CD4-positive, alpha-beta memory T cell (primary cell): ENCODE measurements at regions of chr1 and their contacts with region 1.

Region 1: DNA sequence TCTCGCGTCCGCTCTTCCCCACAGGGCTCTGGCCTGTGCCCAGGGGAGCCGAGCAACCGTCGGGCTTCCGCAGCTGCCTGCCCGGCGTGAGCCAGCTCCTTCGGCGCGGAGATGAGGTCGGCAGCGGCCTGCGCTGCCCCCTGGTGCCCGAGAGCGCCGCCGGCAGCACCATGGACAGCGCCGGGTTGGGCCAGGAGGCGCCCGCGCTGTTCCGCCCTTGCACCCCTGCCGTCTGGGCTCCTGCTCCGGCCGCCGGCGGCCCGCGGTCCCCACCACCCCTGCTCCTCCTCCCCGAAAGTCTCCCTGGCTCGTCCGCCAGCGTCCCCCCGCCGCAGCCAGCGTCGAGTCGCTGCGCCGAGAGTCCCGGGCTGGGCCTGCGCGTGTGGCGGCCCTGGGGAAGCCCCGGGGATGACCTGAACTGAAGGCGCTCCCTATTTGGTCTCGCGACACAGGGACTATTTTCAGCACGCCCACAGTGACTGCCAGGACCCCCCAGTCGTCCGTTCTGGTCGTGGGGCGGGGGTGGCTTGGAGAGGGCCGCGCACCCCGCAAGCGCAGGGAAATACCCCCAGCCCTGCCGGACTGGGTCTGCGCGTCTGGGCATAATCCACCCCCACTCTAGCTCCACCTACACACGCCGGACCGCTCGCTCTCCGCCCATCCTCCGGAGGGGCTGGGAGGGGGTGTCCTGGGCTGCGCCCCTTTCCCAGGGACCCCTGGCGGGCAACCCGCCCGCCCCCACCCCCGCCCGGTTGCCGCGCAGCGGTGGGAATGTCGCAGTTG is 1.3 kb downstream of the HES3 start:
- DNase-seq: peak; percentile 67 to 78 (median 75)
- H3K4me3 ChIP-seq: no peak overlapping the region
- H3K4me3 Mint-ChIP-seq: no peak overlapping the region
- H3K27ac ChIP-seq: no peak overlapping the region
- H3K27ac Mint-ChIP-seq: peak overlapping the region in 1 of 7 donors; percentile 44
- H3K4me1 ChIP-seq: peaks cover 23% of the 10 kb centered on the region
- H3K4me1 Mint-ChIP-seq: peaks cover 8 to 29% (median 13%) of the 10 kb centered on the region in 4 donors
- H3K27me3 ChIP-seq: peaks cover 43% of the 10 kb centered on the region
- H3K27me3 Mint-ChIP-seq: peaks cover 30 to 42% of the 10 kb centered on the region in 2 donors

Region 2: DNA sequence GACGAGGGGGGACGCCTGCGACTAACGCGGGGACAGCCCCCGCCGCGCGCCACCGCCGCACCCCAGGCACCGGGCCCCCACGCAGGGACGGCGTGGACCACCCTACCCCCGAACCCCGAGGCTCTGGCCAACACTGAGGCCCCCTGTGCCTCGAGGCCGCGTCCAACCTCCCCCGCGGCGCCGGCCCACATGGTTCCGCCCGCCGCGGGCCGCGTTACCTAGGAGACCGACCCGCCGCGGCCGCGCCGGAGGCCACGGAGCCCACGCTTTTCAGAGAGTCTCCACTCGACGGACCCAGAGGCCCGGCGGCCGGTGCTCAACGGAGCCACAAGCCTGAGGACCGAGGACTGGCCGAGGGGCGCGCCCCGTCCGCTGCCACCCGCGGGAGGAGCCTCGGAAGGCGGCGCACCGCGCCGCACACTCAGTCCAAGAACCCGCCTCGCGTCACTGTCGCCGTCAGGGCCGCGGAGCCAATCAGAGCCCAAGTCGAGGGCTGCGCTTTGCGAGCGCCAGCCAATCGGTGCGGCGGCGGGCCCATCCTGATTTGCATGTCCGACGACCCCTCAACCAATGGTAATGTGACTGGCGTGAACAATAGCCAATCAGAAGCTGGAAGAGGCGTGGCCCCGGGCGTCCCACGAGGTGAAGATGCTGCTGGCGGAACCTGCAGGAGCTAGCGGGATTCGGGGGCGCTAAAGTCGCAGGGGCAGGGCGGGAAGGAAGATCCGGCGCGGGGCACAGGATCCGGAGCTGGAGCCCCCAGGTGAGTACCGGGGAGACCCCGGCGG is 253.1 kb before region 1 on chr1 and contains the start of gene NPHP4:
- CTCF ChIA-PET with region 1: no interaction called
- POLR2A ChIA-PET with region 1: no interaction called
- intact Hi-C with region 1: loop called (anchors 5 kb)
- DNase-seq: peak; percentile 99
- H3K4me3 ChIP-seq: peak within 1 kb of the TSS; percentile 86 to 92
- H3K4me3 Mint-ChIP-seq: peak within 1 kb of the TSS; percentile 95 to 98 (median 96)
- H3K27ac ChIP-seq: peak within 1 kb of the TSS; percentile 96
- H3K27ac Mint-ChIP-seq: peak within 1 kb of the TSS; percentile 97 to 99 (median 98)
- H3K4me1 ChIP-seq: peaks cover 37% of the 10 kb centered on the region
- H3K4me1 Mint-ChIP-seq: peaks cover 13 to 39% (median 30%) of the 10 kb centered on the region in 4 donors
- H3K27me3 ChIP-seq: no peaks in the 10 kb centered on the region
- H3K27me3 Mint-ChIP-seq: no peaks in the 10 kb centered on the region
- total RNA-seq, gene NPHP4: 7.6 to 9.6 TPM

Region 3: GRCh38 chr1:6108937-6109614 is 136.2 kb before region 1 on chr1:
- CTCF ChIA-PET with region 1: interaction called, 5 read pairs
- POLR2A ChIA-PET with region 1: no interaction called
- intact Hi-C with region 1: loop called (anchors 2 kb)
- DNase-seq: peak in 3 of 5 donors; percentile 18 to 40 (median 28)
- H3K4me3 ChIP-seq: no peak overlapping the region
- H3K4me3 Mint-ChIP-seq: no peak overlapping the region
- H3K27ac ChIP-seq: no peak overlapping the region
- H3K27ac Mint-ChIP-seq: no peak overlapping the region
- H3K4me1 ChIP-seq: no peaks in the 10 kb centered on the region
- H3K4me1 Mint-ChIP-seq: peaks cover 0 to 1% (median 0%) of the 10 kb centered on the region in 4 donors
- H3K27me3 ChIP-seq: no peaks in the 10 kb centered on the region
- H3K27me3 Mint-ChIP-seq: peaks cover 3 to 9% of the 10 kb centered on the region in 2 donors

Region 4: GRCh38 chr1:6127587-6128163 is 117.6 kb before region 1 on chr1:
- CTCF ChIA-PET with region 1: no interaction called
- POLR2A ChIA-PET with region 1: no interaction called
- intact Hi-C with region 1: no loop called
- DNase-seq: peak; percentile 61 to 77 (median 69)
- H3K4me3 ChIP-seq: no peak overlapping the region
- H3K4me3 Mint-ChIP-seq: peak overlapping the region in 2 of 8 donors; percentile 31 to 55
- H3K27ac ChIP-seq: no peak overlapping the region
- H3K27ac Mint-ChIP-seq: no peak overlapping the region
- H3K4me1 ChIP-seq: no peaks in the 10 kb centered on the region
- H3K4me1 Mint-ChIP-seq: peaks cover 0 to 2% (median under 1%) of the 10 kb centered on the region in 4 donors
- H3K27me3 ChIP-seq: no peaks in the 10 kb centered on the region
- H3K27me3 Mint-ChIP-seq: peaks cover 2 to 3% of the 10 kb centered on the region in 2 donors

Region 5: GRCh38 chr1:6265151-6265550 is 19.9 kb after region 1 on chr1:
- CTCF ChIA-PET with region 1: interaction called, 10 read pairs
- POLR2A ChIA-PET with region 1: no interaction called
- intact Hi-C with region 1: no loop called
- DNase-seq: no peak
- H3K4me3 ChIP-seq: no peak overlapping the region
- H3K4me3 Mint-ChIP-seq: no peak overlapping the region
- H3K27ac ChIP-seq: no peak overlapping the region
- H3K27ac Mint-ChIP-seq: no peak overlapping the region
- H3K4me1 ChIP-seq: peaks cover 8% of the 10 kb centered on the region
- H3K4me1 Mint-ChIP-seq: peaks cover 0 to 7% (median 0%) of the 10 kb centered on the region in 4 donors
- H3K27me3 ChIP-seq: no peaks in the 10 kb centered on the region
- H3K27me3 Mint-ChIP-seq: peaks cover 1 to 3% of the 10 kb centered on the region in 2 donors

Region 6: DNA sequence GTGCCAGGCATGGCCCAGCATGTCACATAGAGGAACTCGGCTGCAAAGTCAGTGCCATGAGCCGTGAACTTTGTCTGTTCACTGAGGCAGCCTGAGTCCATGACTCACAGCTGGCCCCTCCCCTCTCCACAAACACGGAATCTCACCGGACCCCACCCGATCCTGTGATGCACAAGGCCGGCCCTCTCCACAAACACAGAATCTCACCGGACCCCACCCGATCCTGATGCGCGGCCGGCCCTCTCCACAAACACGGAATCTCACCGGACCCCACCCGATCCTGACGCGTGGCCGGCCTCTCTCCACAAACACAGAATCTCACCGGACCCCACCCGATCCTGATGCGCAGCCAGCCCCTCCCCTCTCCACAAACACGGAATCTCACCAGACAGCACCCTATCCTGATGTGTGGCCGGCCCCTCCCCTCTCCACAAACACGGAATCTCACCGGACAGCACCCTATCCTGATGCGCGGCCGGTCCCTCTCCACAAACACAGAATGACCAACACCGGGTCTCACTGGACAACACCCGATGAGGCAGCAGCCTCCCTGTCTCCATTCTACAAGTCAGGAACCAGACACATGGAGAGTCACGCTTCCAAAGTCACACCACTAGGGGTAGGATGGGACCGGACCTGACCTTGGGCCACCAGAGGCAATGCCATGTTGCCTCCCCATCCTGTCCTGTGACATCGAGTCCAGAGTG is 55.2 kb after region 1 on chr1:
- CTCF ChIA-PET with region 1: no interaction called
- POLR2A ChIA-PET with region 1: no interaction called
- intact Hi-C with region 1: no loop called
- DNase-seq: no peak
- H3K4me3 ChIP-seq: no peak overlapping the region
- H3K4me3 Mint-ChIP-seq: no peak overlapping the region
- H3K27ac ChIP-seq: no peak overlapping the region
- H3K27ac Mint-ChIP-seq: no peak overlapping the region
- H3K4me1 ChIP-seq: no peaks in the 10 kb centered on the region
- H3K4me1 Mint-ChIP-seq: no peaks in the 10 kb centered on the region
- H3K27me3 ChIP-seq: no peaks in the 10 kb centered on the region
- H3K27me3 Mint-ChIP-seq: no peaks in the 10 kb centered on the region

Region 7: DNA sequence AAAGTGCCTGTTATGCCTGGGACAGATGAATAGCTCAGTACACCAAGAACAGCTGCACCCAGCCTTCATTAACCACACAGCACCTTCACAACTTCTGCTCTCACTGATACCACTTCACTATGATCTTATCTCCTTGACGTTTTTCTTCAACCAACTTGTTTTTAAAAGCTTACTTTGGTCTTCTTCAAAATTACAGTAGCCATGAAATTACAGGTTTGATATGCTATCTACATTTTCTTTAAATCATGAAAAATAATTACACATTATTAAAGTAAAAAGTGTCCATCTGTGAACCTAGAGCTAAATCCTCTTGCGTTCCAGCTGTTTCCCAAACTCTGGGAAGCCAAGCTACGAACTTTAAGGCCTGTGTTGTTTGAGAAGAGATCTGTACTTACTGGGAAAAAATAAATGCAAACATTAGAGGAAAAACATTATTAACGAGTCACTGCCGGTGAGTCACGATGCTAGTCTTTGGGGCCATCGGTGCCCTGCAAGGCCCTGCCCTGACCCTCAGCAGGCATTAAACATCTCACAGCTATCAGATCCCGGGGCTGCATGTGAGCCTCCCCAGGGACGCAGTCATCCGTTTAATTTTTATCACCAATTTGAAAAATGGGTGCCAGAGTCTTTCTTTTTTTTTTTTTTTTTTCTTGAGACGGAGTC is 72.0 kb after region 1 on chr1:
- CTCF ChIA-PET with region 1: no interaction called
- POLR2A ChIA-PET with region 1: no interaction called
- intact Hi-C with region 1: no loop called
- DNase-seq: no peak
- H3K4me3 ChIP-seq: no peak overlapping the region
- H3K4me3 Mint-ChIP-seq: no peak overlapping the region
- H3K27ac ChIP-seq: no peak overlapping the region
- H3K27ac Mint-ChIP-seq: peak overlapping the region in 2 of 7 donors; percentile 25 to 37
- H3K4me1 ChIP-seq: no peaks in the 10 kb centered on the region
- H3K4me1 Mint-ChIP-seq: no peaks in the 10 kb centered on the region
- H3K27me3 ChIP-seq: no peaks in the 10 kb centered on the region
- H3K27me3 Mint-ChIP-seq: no peaks in the 10 kb centered on the region

Region 8: GRCh38 chr1:6401673-6402072 is 156.4 kb after region 1 on chr1:
- CTCF ChIA-PET with region 1: interaction called, 66 read pairs
- POLR2A ChIA-PET with region 1: interaction called, 7 read pairs
- intact Hi-C with region 1: loop called (anchors 1 kb)
- DNase-seq: no peak
- H3K4me3 ChIP-seq: no peak overlapping the region
- H3K4me3 Mint-ChIP-seq: no peak overlapping the region
- H3K27ac ChIP-seq: no peak overlapping the region
- H3K27ac Mint-ChIP-seq: no peak overlapping the region
- H3K4me1 ChIP-seq: no peaks in the 10 kb centered on the region
- H3K4me1 Mint-ChIP-seq: peaks cover 0 to 5% (median 4%) of the 10 kb centered on the region in 4 donors
- H3K27me3 ChIP-seq: no peaks in the 10 kb centered on the region
- H3K27me3 Mint-ChIP-seq: peaks cover 2 to 4% of the 10 kb centered on the region in 2 donors

Region 9: GRCh38 chr1:6438047-6438525 is 192.8 kb after region 1 on chr1:
- CTCF ChIA-PET with region 1: interaction called, 38 read pairs
- POLR2A ChIA-PET with region 1: no interaction called
- intact Hi-C with region 1: loop called (anchors 1 kb)
- DNase-seq: peak; percentile 68 to 78 (median 71)
- H3K4me3 ChIP-seq: no peak overlapping the region
- H3K4me3 Mint-ChIP-seq: peak overlapping the region in 4 of 8 donors; percentile 20 to 83 (median 36)
- H3K27ac ChIP-seq: no peak overlapping the region
- H3K27ac Mint-ChIP-seq: peak overlapping the region in 3 of 7 donors; percentile 41 to 75 (median 44)
- H3K4me1 ChIP-seq: peaks cover 5% of the 10 kb centered on the region
- H3K4me1 Mint-ChIP-seq: peaks cover 7 to 14% (median 9%) of the 10 kb centered on the region in 4 donors
- H3K27me3 ChIP-seq: no peaks in the 10 kb centered on the region
- H3K27me3 Mint-ChIP-seq: peaks cover 11 to 12% of the 10 kb centered on the region in 2 donors